ENCODE measurements at regions of chr16 and their contacts with region 1.

Region 1: DNA sequence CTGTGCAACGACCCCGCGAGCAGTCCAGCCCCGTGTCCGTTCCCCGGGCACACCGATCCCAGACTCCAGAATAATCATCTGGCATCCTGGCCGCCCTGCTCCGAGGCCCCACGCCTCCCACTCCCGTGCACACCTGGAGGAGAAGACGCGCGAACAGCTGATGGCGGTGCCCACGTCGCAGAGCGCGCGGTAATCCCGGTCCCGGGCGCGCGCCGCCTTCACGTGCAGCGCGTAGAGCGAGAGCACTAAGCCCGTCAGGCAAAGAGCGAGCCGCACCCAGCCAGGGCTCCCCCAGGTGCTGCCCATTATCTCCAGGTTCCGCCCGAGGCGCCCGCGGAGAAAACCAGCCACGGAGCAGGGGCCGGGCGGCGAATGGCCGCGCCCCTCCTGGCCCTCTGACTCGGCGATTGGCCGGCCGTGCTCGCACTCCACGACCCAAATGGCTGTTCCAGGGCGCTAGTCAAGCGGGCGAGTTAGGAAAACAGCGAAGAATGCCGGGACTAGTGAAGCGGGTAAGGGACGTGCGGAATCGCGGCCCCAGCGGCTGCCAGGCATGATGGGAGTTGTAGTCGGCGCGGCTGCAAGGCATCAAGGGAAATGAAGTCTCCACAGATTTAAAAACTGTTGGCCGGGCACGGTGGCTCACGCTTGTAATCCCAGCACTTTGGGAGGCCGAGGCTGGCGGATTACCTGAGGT is at the start of gene VKORC1:
- DNase-seq: peak; percentile 85
- H3K4me3 Mint-ChIP-seq: peak within 1 kb of the TSS; percentile 99
- H3K27ac Mint-ChIP-seq: peak within 1 kb of the TSS; percentile 83
- H3K4me1 Mint-ChIP-seq: peaks cover 20% of the 10 kb centered on the region
- H3K27me3 Mint-ChIP-seq: no peaks in the 10 kb centered on the region
- total RNA-seq, gene VKORC1: 54.5 and 60.0 TPM in 2 replicates

Region 2: DNA sequence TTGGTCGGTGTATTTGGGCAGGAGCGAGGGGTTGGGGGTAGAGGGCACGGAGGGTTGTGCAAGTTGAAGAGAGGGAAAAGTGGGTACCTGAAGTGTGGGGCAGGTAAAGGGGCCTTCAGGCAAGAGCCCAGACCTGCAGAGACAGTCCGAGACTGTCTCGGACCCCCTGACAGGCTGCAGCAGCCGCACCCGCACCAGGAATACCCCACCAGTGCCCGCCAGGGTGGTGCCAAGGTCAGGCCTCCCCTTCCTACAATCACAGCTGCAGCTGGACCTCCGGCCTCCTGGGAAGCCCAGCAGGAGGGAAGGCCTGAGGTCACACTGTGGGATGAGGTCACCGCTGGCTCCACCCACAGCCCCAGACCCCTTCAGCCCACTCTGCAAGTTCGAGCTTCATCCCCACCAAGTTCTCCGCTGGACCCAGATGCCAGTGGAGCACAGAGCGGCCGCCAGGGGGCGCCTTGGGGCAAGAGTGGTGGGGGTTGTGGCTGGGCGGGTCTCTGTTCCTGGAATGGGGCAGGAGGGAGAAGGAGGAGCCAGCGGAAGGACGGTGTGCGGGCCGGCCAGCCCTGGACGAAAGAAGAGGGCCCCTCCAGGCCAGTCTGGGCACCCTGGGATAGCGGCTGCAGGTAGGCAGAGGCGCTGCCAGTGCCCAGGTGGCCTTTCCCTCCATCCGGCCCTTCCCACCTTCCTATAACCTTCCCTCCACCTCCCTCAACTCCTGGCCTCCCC is 109.7 kb before region 1 on chr16 and contains the start of gene HSD3B7:
- intact Hi-C with region 1: loop called (anchors 2 kb)
- DNase-seq: peak; percentile 69
- H3K4me3 Mint-ChIP-seq: peak within 1 kb of the TSS; percentile 8
- H3K27ac Mint-ChIP-seq: peak within 1 kb of the TSS; percentile 33
- H3K4me1 Mint-ChIP-seq: peaks cover 4% of the 10 kb centered on the region
- H3K27me3 Mint-ChIP-seq: no peaks in the 10 kb centered on the region
- total RNA-seq, gene HSD3B7: 2.9 and 3.3 TPM in 2 replicates

Region 3: DNA sequence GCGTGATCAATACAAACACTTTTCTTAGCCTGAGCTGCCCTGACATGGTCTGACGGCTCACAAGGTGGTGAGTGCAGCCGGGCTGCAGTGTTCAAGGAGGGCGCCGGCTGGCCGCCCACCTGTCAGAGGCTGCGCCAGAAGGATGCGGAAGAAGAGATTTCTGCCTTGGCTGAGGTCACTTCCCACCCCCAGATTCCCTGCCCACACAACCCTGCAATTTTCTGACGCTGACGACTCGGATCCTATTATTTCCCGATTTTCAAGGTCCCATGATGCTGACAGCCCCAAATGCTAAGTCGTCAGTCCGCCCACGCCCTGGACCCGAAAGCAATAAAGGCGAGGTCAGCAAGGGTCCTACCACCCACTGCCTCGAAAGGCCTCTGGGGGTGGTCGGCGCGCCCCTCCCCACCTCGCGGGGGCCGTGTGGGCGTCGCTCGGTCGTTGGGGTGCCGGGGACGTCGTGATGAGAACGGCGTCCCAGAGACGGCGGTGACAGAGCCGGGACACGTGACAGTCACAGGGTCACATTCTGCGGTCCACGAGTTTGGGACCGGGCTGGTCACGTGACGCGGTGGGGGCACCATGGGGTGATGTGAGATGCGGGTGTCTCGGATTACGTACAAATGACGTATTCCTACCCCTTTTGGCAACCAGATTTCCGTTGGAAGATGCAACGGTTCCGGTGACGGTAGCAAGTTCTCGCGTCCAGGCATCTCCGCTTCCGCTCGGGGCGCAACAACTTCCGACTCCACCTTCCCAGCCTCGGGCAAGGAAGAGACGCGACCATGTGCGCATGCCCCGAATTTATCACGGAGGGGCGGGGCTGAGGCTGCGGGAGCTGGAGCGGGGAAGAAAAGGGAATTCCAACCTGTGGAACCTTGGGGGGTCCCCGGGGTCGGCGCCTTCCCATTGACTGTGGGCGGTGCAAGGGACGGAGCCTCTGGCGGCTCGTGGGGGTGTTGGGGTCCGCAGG is 61.5 kb before region 1 on chr16 and contains the start of gene STX4:
- intact Hi-C with region 1: loop called (anchors 2 kb)
- DNase-seq: peak; percentile 97
- H3K4me3 Mint-ChIP-seq: peak within 1 kb of the TSS; percentile 87
- H3K27ac Mint-ChIP-seq: peak within 1 kb of the TSS; percentile 89
- H3K4me1 Mint-ChIP-seq: peaks cover 16% of the 10 kb centered on the region
- H3K27me3 Mint-ChIP-seq: no peaks in the 10 kb centered on the region
- total RNA-seq, gene STX4: 48.2 and 51.8 TPM in 2 replicates

Region 4: GRCh38 chr16:31108035-31108793 is 13.6 kb after region 1 on chr16 and contains the start of gene BCKDK:
- intact Hi-C with region 1: loop called (anchors 2 kb)
- DNase-seq: peak; percentile 65
- H3K4me3 Mint-ChIP-seq: peak within 1 kb of the TSS; percentile 85
- H3K27ac Mint-ChIP-seq: peak within 1 kb of the TSS; percentile 91
- H3K4me1 Mint-ChIP-seq: peaks cover 18% of the 10 kb centered on the region
- H3K27me3 Mint-ChIP-seq: no peaks in the 10 kb centered on the region
- total RNA-seq, gene BCKDK: 47.5 and 50.0 TPM in 2 replicates